ENCODE measurements at regions of chr12 and their contacts with region 1.

Region 1: DNA sequence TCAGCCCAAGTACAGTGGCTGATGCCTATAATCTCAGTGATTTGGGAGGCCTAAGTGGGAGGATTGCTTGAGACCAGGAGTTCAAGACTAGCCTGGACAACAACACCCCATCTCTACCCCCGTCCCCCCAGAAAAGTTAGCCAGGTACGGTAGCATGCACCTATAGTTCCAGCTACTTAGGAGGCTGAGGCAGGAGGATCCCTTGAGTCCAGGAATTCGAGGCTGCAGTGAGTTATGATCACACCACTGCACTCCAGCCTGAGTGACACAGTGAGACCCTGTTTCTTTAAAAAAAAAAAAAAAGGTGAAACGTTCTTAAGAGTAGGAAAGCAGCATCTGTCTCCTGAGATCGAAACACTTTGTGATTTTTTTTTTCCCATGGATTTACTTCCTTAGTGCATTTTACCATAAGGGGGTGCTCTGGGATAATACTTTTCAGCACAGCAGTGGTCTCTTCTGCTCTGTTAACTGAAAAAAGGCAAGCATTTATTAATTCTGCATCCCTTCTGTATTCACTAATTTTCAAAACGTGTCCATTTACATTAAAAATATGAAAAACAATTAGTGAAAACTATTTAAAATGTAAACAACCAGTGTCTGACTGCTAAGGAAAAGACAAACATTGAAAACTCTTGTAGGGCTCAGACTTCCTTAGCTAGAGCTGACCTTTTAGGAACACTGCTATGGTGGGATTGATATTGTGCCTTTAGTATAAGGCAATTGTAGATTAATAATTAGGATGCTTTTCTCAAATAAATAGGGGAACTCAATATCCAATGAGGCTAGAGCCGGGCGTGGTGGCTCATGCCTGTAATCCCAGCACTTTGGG is 31.2 kb upstream of the USP44 start:
- DNase-seq: peak; percentile 43
- H3K4me3 ChIP-seq: no peak overlapping the region; a peak in 1 of 4 replicates
- H3K27ac ChIP-seq: no peak overlapping the region
- H3K4me1 ChIP-seq: no peaks in the 10 kb centered on the region
- H3K27me3 ChIP-seq: no peaks in the 10 kb centered on the region; the same call in 1 of the 2 replicates
- CTCF ChIP-seq: peak; percentile 66
- EP300 ChIP-seq: no peak
- RAD21 ChIP-seq: peak; percentile 80

Region 2: GRCh38 chr12:95621725-95622124 is 39.3 kb after region 1 on chr12:
- CTCF ChIA-PET with region 1: no interaction called
- POLR2A ChIA-PET with region 1: no interaction called
- DNase-seq: no peak
- H3K4me3 ChIP-seq: no peak overlapping the region
- H3K27ac ChIP-seq: no peak overlapping the region
- H3K4me1 ChIP-seq: no peaks in the 10 kb centered on the region
- H3K27me3 ChIP-seq: no peaks in the 10 kb centered on the region
- CTCF ChIP-seq: no peak
- EP300 ChIP-seq: no peak
- RAD21 ChIP-seq: no peak

Region 3: DNA sequence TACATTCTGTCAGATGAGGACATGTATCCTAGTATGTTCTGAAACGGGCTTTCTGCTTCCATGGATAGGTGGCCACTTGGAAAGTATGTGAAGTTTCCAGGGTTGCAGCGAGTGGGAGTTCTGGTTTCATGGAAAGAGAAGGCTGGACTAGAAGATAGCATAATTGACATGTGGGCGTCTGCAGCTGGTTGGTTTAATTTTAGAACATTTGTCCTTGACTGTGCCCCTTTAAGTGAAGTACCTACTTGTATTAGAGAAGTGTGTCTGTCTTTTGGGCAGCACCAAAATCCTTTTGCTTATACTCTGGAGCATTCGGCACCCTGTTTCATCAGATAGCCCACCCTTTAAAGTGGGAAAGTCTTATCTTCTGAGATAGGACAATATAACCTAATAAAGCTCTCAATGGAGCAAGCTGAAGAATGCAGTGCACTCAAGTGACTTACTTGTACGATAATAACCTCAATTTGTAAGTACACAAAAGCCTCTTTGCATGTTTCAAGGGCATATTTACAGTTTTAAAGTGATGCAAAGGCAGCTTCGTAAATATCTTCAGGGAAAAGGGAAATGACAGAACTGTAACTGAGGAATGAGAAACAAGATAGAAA is 172.9 kb after region 1 on chr12:
- CTCF ChIA-PET with region 1: no interaction called
- POLR2A ChIA-PET with region 1: no interaction called
- DNase-seq: no peak
- H3K4me3 ChIP-seq: no peak overlapping the region
- H3K27ac ChIP-seq: no peak overlapping the region
- H3K4me1 ChIP-seq: no peaks in the 10 kb centered on the region
- H3K27me3 ChIP-seq: peaks cover 5% of the 10 kb centered on the region; the same call in 1 of the 2 replicates
- CTCF ChIP-seq: no peak
- EP300 ChIP-seq: no peak
- RAD21 ChIP-seq: no peak

Region 4: GRCh38 chr12:95809000-95809680 is 226.7 kb after region 1 on chr12:
- CTCF ChIA-PET with region 1: interaction called, 17 read pairs
- POLR2A ChIA-PET with region 1: no interaction called
- DNase-seq: no peak
- H3K4me3 ChIP-seq: no peak overlapping the region
- H3K27ac ChIP-seq: no peak overlapping the region
- H3K4me1 ChIP-seq: peaks cover 0 to 9% of the 10 kb centered on the region in 2 experiments; a peak in 2 of 4 replicates
- H3K27me3 ChIP-seq: peaks cover 5% of the 10 kb centered on the region; the same call in 1 of the 2 replicates
- CTCF ChIP-seq: no peak
- EP300 ChIP-seq: no peak
- RAD21 ChIP-seq: no peak

Region 5: GRCh38 chr12:95848575-95849388 is 266.3 kb after region 1 on chr12:
- CTCF ChIA-PET with region 1: interaction called, 16 read pairs
- POLR2A ChIA-PET with region 1: no interaction called
- DNase-seq: peak; percentile 47
- H3K4me3 ChIP-seq: no peak overlapping the region
- H3K27ac ChIP-seq: no peak overlapping the region
- H3K4me1 ChIP-seq: no peaks in the 10 kb centered on the region
- H3K27me3 ChIP-seq: peaks cover 10% of the 10 kb centered on the region; the same call in 1 of the 2 replicates
- CTCF ChIP-seq: peak; percentile 61
- EP300 ChIP-seq: no peak
- RAD21 ChIP-seq: peak; percentile 86